ENCODE measurements at regions of chr13 and their contacts with region 1.

Region 1: GRCh38 chr13:109778102-109778542 is 8.3 kb downstream of the IRS2 start:
- DNase-seq: no peak
- H3K4me3 Mint-ChIP-seq: no peak overlapping the region
- H3K27ac Mint-ChIP-seq: no peak overlapping the region
- H3K4me1 Mint-ChIP-seq: peaks cover 45% of the 10 kb centered on the region
- H3K27me3 Mint-ChIP-seq: no peaks in the 10 kb centered on the region

Region 2: GRCh38 chr13:109162248-109163053 is 615.7 kb before region 1 on chr13:
- intact Hi-C with region 1: loop called (anchors 5 kb)
- DNase-seq: peak; percentile 44
- H3K4me3 Mint-ChIP-seq: peak overlapping the region; percentile 1
- H3K27ac Mint-ChIP-seq: peak overlapping the region; percentile 6
- H3K4me1 Mint-ChIP-seq: peaks cover 34% of the 10 kb centered on the region
- H3K27me3 Mint-ChIP-seq: peaks cover 12% of the 10 kb centered on the region

Region 3: DNA sequence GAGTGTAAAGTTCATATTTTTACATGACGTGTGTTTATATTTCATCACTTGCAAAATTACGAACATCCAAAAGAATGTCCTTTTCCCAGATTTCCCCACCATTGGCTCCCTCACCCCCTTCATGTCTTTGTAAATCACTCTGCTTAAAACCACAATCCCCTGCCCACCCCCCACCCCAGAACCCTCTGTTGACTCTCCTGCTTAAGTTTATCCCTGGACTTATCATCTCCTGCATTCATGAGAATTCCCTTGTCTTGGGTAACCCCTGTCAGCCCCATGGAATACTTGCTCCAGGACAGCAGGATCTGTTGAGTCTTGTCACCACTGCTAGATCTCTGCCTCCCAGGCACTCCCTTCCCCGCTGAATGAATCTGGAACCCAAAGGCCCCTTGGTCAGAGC is 418.9 kb after region 1 on chr13:
- intact Hi-C with region 1: no loop called
- DNase-seq: no peak
- H3K4me3 Mint-ChIP-seq: no peak overlapping the region
- H3K27ac Mint-ChIP-seq: no peak overlapping the region
- H3K4me1 Mint-ChIP-seq: no peaks in the 10 kb centered on the region
- H3K27me3 Mint-ChIP-seq: no peaks in the 10 kb centered on the region